Prostate gland (tissue), 2 donors: ENCODE measurements at regions of chr12 and their contacts with region 1.

Region 1: DNA sequence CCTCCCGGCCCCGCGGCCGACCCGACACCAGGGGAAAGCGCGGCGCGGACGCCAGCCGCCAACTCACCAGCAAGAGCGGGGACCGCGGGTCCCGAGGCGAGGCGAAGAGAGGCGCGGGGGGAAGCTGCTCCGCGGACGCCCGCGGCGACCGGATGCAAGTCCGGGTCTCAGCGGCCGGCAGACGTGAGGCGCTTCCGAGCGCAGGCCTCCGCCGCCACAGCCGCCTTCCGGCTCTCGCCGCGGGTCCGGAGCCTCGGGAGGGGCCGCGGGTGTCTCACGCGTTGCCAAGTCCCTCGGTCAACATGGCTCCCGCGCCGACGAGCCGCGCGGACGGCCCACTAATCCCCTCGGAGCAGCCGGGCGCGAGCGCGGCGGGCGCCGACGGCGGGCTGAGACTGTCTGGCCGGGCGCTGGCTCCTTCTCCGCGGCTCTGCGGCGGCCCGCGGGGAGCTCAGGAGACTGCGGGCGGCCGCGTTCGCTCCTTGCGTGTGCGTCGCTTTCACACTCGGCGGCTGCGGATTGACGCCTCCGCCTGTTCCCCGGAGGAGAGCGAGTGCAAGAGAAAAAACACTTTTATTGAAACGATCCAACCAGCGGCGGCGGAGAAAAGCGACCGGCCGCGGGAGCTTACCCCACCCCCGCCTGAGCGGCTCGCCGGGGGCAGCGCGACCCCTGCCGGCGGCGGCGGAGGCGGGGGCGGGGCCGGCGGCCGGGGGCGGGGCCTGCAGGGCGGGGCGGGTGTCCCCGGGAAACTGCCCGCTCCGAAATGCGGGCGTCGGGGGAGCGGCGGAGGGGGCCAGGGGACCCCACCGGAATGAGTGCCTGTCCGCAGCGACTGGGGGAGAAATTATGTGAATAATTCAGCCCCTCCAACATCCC is at the start of gene CDK17:
- DNase-seq: peak; percentile 77
- H3K4me3 ChIP-seq: peak within 1 kb of the TSS; percentile 87 to 95
- H3K27ac ChIP-seq: peak within 1 kb of the TSS; percentile 96 to 97
- H3K4me1 ChIP-seq: no peaks in the 10 kb centered on the region
- H3K27me3 ChIP-seq: no peaks in the 10 kb centered on the region
- CTCF ChIP-seq: peak; percentile 16 to 77 (median 60)
- POLR2A ChIP-seq: peak; percentile 67
- total RNA-seq, gene CDK17: 34.7 to 79.5 TPM

Region 2: DNA sequence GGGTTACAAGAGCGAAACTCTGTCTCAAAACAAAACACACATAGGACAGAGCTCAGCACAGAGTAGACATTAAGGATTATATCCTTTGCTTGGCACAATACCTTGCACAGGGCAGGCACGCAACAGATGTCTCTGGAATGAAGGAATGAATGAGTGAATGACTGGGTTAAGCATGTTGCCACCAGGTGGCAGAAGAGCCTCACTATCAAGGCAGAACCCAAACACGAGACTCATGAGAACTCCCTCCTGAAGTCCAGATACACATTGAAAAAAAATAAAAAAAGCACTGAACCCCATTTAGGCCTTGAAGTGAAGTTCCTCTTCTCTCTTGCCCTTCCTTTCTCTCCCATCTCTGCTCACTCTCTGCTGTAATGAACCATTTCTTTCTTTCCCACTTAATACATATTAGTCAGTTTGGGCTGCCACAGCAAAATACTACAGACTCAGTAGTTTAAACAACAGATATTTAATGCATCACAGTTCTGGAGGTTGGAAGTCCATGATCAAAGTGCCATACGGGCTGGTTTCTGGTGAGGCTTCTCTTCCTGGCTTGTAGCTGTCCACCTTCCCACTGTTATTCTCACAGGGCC is 338.2 kb before region 1 on chr12:
- intact Hi-C with region 1: loop called (anchors 10 kb)
- DNase-seq: peak; percentile 71
- H3K4me3 ChIP-seq: no peak overlapping the region
- H3K27ac ChIP-seq: no peak overlapping the region
- H3K4me1 ChIP-seq: no peaks in the 10 kb centered on the region
- H3K27me3 ChIP-seq: no peaks in the 10 kb centered on the region
- CTCF ChIP-seq: peak; percentile 84 to 86 (median 84)
- POLR2A ChIP-seq: no peak

Region 3: GRCh38 chr12:96219698-96220206 is 180.4 kb before region 1 on chr12:
- intact Hi-C with region 1: loop called (anchors 5 kb)
- DNase-seq: no peak
- H3K4me3 ChIP-seq: no peak overlapping the region
- H3K27ac ChIP-seq: no peak overlapping the region
- H3K4me1 ChIP-seq: no peaks in the 10 kb centered on the region
- H3K27me3 ChIP-seq: no peaks in the 10 kb centered on the region
- CTCF ChIP-seq: no peak
- POLR2A ChIP-seq: no peak

Region 4: DNA sequence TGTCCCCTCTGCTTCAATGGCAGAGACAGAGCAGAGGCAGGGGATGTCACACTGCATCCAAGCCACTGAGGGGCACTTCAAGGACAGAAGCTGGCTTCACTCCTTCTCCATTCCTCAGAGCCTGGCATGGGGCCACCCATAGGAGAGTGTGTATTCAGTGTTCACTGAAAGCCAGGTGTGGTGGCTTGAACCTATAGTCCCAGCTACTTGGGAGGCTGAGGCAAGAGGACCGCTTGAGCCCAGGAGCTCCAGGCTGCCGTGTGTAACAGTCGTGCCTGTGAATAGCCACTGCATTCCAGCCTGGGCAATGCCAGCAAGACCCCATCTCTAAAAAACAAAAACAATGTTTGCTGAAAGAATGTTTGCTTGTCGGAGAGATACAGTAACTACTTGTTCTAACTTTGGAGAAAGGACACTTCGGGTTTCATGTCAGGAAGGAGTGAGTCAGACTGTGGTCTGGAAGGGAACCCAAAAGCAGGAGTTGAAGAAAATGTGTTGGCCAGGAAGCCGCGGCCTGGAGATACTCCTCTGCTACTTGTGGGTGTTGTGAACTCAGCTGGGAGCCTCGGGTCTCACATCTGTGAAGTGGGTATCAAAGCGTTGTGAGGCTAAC is 162.6 kb before region 1 on chr12:
- intact Hi-C with region 1: loop called (anchors 5 kb)
- DNase-seq: no peak
- H3K4me3 ChIP-seq: no peak overlapping the region
- H3K27ac ChIP-seq: peak overlapping the region; percentile 60 to 68
- H3K4me1 ChIP-seq: no peaks in the 10 kb centered on the region
- H3K27me3 ChIP-seq: no peaks in the 10 kb centered on the region
- CTCF ChIP-seq: no peak
- POLR2A ChIP-seq: no peak

Region 5: DNA sequence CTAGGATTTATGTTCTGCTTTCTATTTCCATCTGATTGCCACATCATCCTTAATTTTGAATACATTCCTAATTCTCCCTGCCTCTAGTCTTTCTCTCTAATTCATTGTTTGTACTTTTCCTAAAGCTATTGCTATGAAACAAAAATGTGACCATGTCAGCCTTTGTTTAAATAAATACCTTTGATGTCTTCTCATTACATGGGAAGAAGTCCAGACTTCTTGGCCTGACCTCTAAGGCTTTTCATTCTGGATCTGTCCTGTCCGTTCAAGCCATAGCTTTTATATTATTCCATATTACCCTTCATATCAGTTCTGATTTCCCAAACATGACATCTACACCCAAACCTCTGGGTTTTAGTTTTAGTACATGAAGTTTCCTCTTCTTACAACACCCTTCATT is 91.3 kb before region 1 on chr12:
- intact Hi-C with region 1: loop called (anchors 5 kb)
- DNase-seq: no peak
- H3K4me3 ChIP-seq: no peak overlapping the region
- H3K27ac ChIP-seq: no peak overlapping the region
- H3K4me1 ChIP-seq: no peaks in the 10 kb centered on the region
- H3K27me3 ChIP-seq: no peaks in the 10 kb centered on the region
- CTCF ChIP-seq: no peak
- POLR2A ChIP-seq: no peak

Region 6: GRCh38 chr12:96343347-96343954 is 56.7 kb before region 1 on chr12:
- intact Hi-C with region 1: loop called (anchors 10 kb)
- DNase-seq: no peak
- H3K4me3 ChIP-seq: no peak overlapping the region
- H3K27ac ChIP-seq: no peak overlapping the region
- H3K4me1 ChIP-seq: no peaks in the 10 kb centered on the region
- H3K27me3 ChIP-seq: no peaks in the 10 kb centered on the region
- CTCF ChIP-seq: no peak
- POLR2A ChIP-seq: no peak

Region 7: DNA sequence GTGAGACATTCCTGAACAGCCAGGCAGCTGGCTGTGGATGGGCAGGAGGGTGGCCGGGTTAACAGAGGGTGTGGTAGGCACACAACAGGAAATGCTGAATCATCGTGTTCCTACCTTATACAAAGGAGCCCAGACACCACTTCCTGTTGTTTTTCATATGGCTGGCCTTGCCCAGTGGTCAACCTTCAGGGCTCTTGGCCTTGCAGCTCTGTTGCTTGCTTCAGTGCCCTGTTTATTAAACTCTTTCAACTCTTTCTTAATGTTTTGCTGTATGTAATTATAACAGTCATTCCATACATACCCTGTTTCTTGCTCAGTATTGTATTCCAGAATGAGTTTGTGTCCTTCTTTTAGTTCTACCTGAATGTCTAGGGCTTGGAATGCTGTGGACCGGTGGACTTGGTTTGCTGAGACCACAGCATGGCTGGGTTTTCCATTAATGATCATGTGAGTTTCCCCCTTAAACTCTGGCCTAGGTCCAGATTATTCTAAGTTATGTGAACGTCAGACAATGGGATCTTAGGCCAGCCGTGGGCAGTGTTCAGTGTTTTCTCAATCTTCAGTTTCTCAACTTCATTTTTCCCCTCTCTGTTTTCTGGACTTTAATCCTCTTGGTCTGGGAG is 101.1 kb after region 1 on chr12:
- intact Hi-C with region 1: loop called (anchors 5 kb)
- DNase-seq: peak; percentile 20
- H3K4me3 ChIP-seq: no peak overlapping the region
- H3K27ac ChIP-seq: no peak overlapping the region
- H3K4me1 ChIP-seq: no peaks in the 10 kb centered on the region
- H3K27me3 ChIP-seq: no peaks in the 10 kb centered on the region
- CTCF ChIP-seq: no peak
- POLR2A ChIP-seq: no peak